Dendritic cell treated with granulocyte-macrophage colony-stimulating factor and Interleukin-4, amounts not matched to agents 40 ng/mL and 50 ng/mL, for 4 days (primary cell): ENCODE measurements at regions of chr20 and their contacts with region 1.

Region 1: GRCh38 chr20:13771853-13772453 is 12.8 kb downstream of the ESF1 start:
- H3K4me3 Mint-ChIP-seq: no peak overlapping the region
- H3K27ac Mint-ChIP-seq: no peak overlapping the region
- H3K4me1 Mint-ChIP-seq: peaks cover 4% of the 10 kb centered on the region
- H3K27me3 Mint-ChIP-seq: no peaks in the 10 kb centered on the region

Region 2: DNA sequence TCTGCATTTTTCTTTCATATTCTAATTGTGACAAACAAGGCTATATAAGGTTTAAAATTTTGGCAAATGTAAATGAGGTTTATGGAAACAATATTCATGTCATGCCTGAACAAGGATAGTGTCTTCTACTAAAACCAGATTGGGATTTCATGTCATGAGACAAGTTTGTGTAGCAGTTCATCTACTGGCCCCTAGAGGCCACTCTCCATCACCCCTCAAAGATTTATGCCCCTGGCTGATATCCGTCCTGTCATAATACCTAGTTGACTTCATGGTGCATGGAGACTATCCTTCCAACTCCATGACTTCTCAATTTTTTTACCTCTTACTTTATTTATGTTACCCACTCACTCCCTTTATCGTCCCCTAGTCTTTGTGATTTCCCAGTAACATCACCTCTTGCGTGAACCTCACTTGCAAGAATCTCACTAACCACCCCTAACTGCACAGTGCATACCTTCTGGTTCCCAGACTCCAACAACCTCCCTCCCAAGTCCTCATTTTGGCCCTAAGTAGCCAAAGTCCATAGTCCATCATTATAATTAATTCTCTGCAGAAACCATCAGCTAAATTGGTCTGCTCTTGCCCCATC is 313.0 kb before region 1 on chr20:
- intact Hi-C with region 1: loop called (anchors 5 kb)
- H3K4me3 Mint-ChIP-seq: no peak overlapping the region
- H3K27ac Mint-ChIP-seq: no peak overlapping the region
- H3K4me1 Mint-ChIP-seq: no peaks in the 10 kb centered on the region
- H3K27me3 Mint-ChIP-seq: no peaks in the 10 kb centered on the region

Region 3: GRCh38 chr20:13610184-13610583 is 161.8 kb before region 1 on chr20:
- intact Hi-C with region 1: loop called (anchors 10 kb)
- H3K4me3 Mint-ChIP-seq: no peak overlapping the region
- H3K27ac Mint-ChIP-seq: no peak overlapping the region
- H3K4me1 Mint-ChIP-seq: no peaks in the 10 kb centered on the region
- H3K27me3 Mint-ChIP-seq: no peaks in the 10 kb centered on the region

Region 4: DNA sequence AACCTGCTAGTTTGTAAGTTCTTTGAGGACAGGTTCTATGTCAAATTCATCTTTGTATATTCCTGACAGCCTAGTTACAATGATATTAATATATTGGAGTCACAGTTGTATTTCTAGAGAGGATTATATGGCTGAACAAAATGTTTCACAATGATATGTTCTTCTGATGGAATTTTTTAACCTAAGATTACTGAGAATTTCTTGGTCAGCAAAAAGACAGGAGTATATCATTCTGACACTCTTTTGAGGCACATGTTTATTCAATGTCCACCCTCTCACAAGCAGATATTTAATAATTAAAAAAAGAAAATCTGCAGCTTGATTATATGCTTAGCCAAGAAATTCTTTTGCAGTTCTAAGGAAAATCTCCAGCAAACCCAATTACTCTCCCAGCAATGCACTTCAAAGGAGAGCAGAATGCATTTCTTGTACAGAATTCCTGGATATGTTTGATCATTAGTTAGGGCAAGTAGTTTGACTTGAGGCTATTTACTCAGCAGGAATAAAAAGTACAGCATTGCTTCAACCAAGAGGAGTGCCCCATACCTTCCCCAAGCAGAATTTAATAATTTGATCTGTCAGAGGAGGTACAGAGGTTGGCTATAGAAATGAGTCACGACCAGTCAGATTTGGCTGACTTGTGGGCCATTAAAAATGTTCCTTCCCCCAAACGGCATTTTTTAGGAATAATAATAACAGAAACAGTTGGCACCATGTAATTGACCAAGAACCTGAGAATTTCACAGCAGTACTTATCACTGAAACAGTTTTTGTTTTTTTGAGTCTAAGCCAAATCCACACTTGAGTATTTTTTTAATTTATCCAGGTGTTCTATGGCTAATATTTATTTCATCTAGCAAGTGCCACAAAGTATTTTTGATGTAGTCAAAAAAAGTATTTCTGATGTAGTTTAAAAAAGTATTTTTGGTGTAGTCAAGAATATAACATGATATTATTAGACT is 1073.5 kb after region 1 on chr20:
- intact Hi-C with region 1: no loop called
- H3K4me3 Mint-ChIP-seq: no peak overlapping the region
- H3K27ac Mint-ChIP-seq: no peak overlapping the region
- H3K4me1 Mint-ChIP-seq: no peaks in the 10 kb centered on the region
- H3K27me3 Mint-ChIP-seq: no peaks in the 10 kb centered on the region